Activated CD4-positive, alpha-beta T cell treated with anti-CD3 and anti-CD28 coated beads, Interleukin-2, amount 10 ng/mL, durations not matched to agents 24 days and 14 days (primary cell): ENCODE measurements at regions of chr1 and their contacts with region 1.

Region 1: GRCh38 chr1:156456622-156457465 is 43.7 kb downstream of the MEF2D start:
- DNase-seq: peak; percentile 98
- H3K4me3 Mint-ChIP-seq: peak overlapping the region; percentile 92
- H3K27ac Mint-ChIP-seq: peak overlapping the region; percentile 98
- H3K4me1 Mint-ChIP-seq: peaks cover 16% of the 10 kb centered on the region
- H3K27me3 Mint-ChIP-seq: peaks cover 14% of the 10 kb centered on the region

Region 2: DNA sequence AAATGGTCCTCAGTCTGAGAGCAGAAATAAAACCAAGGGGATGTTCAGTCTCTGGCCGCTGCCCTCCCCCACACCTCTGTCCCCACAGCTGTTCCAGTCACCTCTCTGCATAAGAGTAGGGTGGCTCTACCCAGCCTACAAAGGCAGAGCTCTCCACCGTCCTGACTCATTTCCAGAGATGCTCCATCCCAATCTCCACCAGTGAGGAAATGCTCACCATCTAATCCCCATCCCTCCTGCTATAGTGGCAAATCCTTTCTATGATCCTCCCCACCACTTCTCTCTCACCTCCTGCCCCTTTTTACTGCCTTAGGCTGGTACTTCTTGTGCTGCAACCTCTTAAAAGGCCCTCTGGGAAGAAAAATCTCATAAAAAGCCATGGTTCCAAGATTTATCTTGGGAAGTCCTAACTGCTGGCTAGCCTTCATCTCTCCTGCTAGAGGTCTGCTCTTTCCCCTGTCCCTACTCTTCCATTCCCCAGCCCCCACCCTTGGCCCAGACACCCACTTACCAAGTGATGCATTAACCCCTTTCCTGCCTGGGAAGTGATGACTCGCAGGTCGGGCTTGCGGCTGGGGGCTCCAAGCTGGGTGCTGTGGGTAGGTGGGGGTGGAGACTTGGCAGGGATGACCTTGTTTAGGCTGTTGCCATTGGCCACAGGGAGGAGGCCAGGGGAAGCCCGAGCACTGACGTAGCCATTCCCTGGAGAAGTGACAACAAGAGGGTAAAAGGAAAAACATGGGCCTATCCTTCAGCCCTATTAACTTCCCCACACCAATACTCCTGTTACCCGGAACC is 19.9 kb after region 1 on chr1:
- intact Hi-C with region 1: no loop called
- DNase-seq: no peak
- H3K4me3 Mint-ChIP-seq: peak overlapping the region; percentile 10
- H3K27ac Mint-ChIP-seq: peak overlapping the region; percentile 52
- H3K4me1 Mint-ChIP-seq: peaks cover 41% of the 10 kb centered on the region
- H3K27me3 Mint-ChIP-seq: no peaks in the 10 kb centered on the region

Region 3: GRCh38 chr1:156583821-156584622 is 127.2 kb after region 1 on chr1:
- intact Hi-C with region 1: loop called (anchors 1 kb)
- DNase-seq: peak; percentile 93
- H3K4me3 Mint-ChIP-seq: no peak overlapping the region
- H3K27ac Mint-ChIP-seq: peak overlapping the region; percentile 34
- H3K4me1 Mint-ChIP-seq: peaks cover 13% of the 10 kb centered on the region
- H3K27me3 Mint-ChIP-seq: no peaks in the 10 kb centered on the region

Region 4: DNA sequence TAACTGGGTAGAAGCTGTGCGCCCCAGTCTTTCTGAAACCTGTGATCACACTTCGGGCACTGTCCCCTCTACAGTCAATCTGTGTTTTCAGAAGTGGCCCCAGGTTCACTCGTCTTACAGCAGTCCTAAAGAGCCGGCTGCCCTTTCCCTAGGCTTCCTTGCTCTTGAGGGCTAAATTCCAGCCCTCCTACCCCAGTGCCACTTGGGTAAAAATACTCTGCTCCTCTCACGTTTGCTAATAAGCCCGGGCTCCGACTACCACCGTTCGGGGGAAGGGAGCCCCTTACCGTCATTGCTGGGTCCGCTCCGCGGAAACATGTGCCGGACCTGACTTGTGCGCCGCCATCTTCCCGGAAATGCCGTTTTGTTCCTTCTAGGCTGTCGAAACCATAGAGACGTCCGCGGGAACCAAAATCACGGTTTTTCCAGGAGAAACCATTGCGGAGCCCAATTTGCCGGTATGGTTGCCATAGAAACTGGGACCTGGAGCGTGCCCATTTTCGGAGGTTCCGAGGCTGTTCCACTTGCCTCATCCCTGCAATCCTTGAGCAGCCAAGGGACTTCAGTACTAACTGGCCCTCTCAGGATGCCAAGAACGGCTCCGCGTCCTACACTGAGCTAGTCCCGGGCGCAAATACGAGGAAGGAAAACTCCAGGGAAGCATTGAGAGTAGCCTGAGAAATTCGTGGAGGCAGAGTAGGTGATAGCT is 144.4 kb after region 1 on chr1 and contains the start of gene GPATCH4:
- intact Hi-C with region 1: loop called (anchors 2 kb)
- DNase-seq: peak; percentile 95
- H3K4me3 Mint-ChIP-seq: peak within 1 kb of the TSS; percentile 88
- H3K27ac Mint-ChIP-seq: peak within 1 kb of the TSS; percentile 98
- H3K4me1 Mint-ChIP-seq: peaks cover 33% of the 10 kb centered on the region
- H3K27me3 Mint-ChIP-seq: no peaks in the 10 kb centered on the region
- total RNA-seq, gene GPATCH4: 99.0 and 99.2 TPM in 2 replicates

Region 5: GRCh38 chr1:156677616-156678596 is 221.1 kb after region 1 on chr1:
- intact Hi-C with region 1: no loop called
- DNase-seq: peak; percentile 76
- H3K4me3 Mint-ChIP-seq: peak overlapping the region; percentile 31
- H3K27ac Mint-ChIP-seq: peak overlapping the region; percentile 6
- H3K4me1 Mint-ChIP-seq: peaks cover 13% of the 10 kb centered on the region
- H3K27me3 Mint-ChIP-seq: peaks cover 80% of the 10 kb centered on the region

Region 6: DNA sequence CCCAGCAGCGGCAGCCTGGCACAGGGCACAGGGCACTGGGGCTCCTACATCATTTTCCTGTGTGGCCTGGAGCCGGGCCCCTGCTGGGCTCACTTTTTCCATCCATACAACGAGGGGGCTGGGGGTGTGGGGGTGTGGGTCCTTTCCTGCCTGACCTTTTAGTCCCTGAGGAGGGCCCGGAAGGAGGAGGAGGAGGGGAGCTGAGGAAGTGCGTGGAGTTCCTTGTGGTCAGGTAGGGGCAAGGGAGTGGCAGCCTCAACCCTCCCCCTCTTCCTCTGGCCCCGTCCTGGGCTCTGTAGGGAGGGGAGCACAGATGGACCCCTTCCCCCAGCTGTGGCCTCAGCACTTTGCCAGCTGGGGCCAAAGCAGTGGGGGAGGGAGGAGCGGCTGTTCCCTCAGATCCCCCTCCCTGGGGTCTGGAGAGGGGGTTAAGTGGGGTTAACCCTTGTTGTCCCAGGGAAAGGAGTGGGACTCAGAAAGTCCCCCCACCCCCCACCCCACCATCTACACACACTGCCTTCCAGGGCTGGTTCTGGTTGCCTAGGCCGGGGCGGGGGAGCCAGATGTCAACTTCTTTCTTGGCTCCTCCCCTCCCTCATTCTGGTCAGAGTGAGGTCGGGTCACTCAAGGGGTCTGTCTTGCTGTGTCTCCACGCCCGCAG is 409.5 kb after region 1 on chr1:
- intact Hi-C with region 1: no loop called
- DNase-seq: peak; percentile 74
- H3K4me3 Mint-ChIP-seq: peak overlapping the region; percentile 73
- H3K27ac Mint-ChIP-seq: peak overlapping the region; percentile 90
- H3K4me1 Mint-ChIP-seq: peaks cover 78% of the 10 kb centered on the region
- H3K27me3 Mint-ChIP-seq: peaks cover 3% of the 10 kb centered on the region